OCI-LY7 (cell line): ENCODE measurements at regions of chr4 and their contacts with region 1.

Region 1: DNA sequence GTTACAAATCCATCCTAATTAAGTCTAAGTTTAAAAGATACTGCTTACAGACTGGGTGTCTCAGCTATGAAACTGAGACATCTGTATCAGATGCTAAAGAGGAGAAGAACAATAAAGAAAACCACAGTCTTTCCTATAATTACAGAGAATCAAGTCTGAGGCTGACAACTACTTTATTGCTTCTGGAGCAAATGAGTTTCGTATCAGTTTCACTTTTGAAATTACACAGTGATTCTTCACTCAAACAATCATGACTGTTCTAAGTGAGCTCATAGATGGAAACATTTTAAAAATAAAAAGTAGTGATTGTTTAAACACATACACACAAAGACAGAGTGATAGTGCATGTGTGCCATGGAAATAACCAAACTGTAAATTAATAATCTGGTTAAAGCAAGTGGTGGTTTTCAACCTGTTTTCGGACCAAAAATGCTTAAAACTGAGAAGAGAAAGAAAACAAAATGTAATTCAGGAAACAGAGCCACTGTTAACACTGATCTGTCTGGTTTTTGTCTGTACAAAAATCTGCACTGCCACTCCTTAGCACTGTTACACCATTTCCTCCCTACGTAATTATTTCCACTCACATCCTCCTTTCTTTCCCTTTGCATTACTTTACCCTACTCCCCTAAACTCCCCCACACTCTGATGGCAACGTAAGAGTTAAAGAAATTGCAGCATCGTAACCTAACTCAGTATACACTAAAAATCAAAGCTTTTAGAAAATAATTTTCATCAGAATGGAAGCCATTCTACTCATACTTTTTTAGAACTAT is 12.5 kb downstream of the RFC1 start:
- DNase-seq: peak; percentile 71
- H3K4me3 ChIP-seq: peak overlapping the region; percentile 64
- H3K27ac ChIP-seq: peak overlapping the region; percentile 93
- H3K4me1 ChIP-seq: peaks cover 68% of the 10 kb centered on the region
- CTCF ChIP-seq: no peak

Region 2: DNA sequence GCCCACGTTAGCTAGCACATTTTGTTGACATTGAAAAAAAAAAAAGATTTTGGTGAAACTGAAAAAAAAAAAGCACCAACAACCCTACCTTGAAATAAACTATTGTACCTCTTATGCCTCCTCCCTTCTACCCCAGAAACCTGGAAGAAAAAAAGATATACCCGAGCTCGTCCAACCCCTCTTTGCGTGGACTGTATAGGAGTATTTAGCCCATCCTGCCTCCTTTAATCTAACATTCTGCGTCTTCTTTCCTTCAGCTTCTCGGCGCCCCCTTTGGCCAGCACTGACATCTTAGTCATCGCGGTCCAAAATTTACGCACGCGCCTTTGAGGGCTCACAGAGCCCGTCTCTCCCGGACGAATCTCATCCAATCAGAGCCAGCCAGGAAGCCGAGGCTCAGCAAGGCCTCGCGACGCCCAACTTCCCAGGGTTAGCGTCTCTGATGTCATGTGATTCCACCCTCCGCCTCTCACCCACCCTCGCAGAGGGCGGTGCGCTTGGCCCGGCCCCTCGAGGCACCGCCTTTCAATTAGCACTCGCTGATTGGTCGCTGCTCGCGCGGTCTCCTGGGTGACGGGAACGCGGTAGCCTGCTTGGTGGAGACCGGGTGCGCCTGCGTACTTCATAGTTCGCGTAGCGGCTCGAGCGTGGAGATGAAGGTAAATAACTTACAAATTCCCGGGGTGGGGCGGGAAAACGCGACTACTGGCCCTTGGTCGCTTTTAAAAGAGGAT is 171.6 kb before region 1 on chr4 and contains the start of gene WDR19:
- CTCF ChIA-PET with region 1: interaction called, 3 read pairs
- POLR2A ChIA-PET with region 1: interaction called, 4 read pairs
- intact Hi-C with region 1: loop called (anchors 5 kb)
- DNase-seq: peak; percentile 100
- H3K4me3 ChIP-seq: peak within 1 kb of the TSS; percentile 83
- H3K27ac ChIP-seq: peak within 1 kb of the TSS; percentile 55
- H3K4me1 ChIP-seq: peaks cover 17% of the 10 kb centered on the region
- CTCF ChIP-seq: peak; percentile 81
- total RNA-seq, gene WDR19: 40.5 and 41.2 TPM in 2 replicates

Region 3: GRCh38 chr4:39365830-39366771 is 12.4 kb after region 1 on chr4 and contains the start of gene RFC1:
- CTCF ChIA-PET with region 1: no interaction called
- POLR2A ChIA-PET with region 1: interaction called, 13 read pairs
- intact Hi-C with region 1: no loop called
- DNase-seq: peak; percentile 95
- H3K4me3 ChIP-seq: peak within 1 kb of the TSS; percentile 86
- H3K27ac ChIP-seq: peak within 1 kb of the TSS; percentile 79
- H3K4me1 ChIP-seq: peaks cover 41% of the 10 kb centered on the region
- CTCF ChIP-seq: no peak
- total RNA-seq, gene RFC1: 72.7 and 91.0 TPM in 2 replicates